CD4-positive, alpha-beta memory T cell (primary cell): ENCODE measurements at regions of chr17 and their contacts with region 1.

Region 1: GRCh38 chr17:48307814-48308411 is 122.1 kb downstream of the SKAP1 start:
- DNase-seq: peak; percentile 38 to 55 (median 42)
- H3K4me3 ChIP-seq: no peak overlapping the region
- H3K4me3 Mint-ChIP-seq: no peak overlapping the region
- H3K27ac ChIP-seq: no peak overlapping the region
- H3K27ac Mint-ChIP-seq: peak overlapping the region in 2 of 7 donors; percentile 15 to 29
- H3K4me1 ChIP-seq: no peaks in the 10 kb centered on the region
- H3K4me1 Mint-ChIP-seq: peaks cover 15 to 33% (median 21%) of the 10 kb centered on the region in 4 donors
- H3K27me3 ChIP-seq: no peaks in the 10 kb centered on the region
- H3K27me3 Mint-ChIP-seq: no peaks in the 10 kb centered on the region

Region 2: GRCh38 chr17:48261297-48261880 is 46.5 kb before region 1 on chr17:
- CTCF ChIA-PET with region 1: interaction called, 16 read pairs
- POLR2A ChIA-PET with region 1: no interaction called
- intact Hi-C with region 1: loop called (anchors 1 kb)
- DNase-seq: no peak
- H3K4me3 ChIP-seq: no peak overlapping the region
- H3K4me3 Mint-ChIP-seq: peak overlapping the region in 1 of 8 donors; percentile 8
- H3K27ac ChIP-seq: no peak overlapping the region
- H3K27ac Mint-ChIP-seq: peak overlapping the region in 2 of 7 donors; percentile 43 to 66
- H3K4me1 ChIP-seq: peaks cover 3% of the 10 kb centered on the region
- H3K4me1 Mint-ChIP-seq: peaks cover 6 to 28% (median 19%) of the 10 kb centered on the region in 4 donors
- H3K27me3 ChIP-seq: no peaks in the 10 kb centered on the region
- H3K27me3 Mint-ChIP-seq: no peaks in the 10 kb centered on the region

Region 3: GRCh38 chr17:48295362-48296288 is 12.3 kb before region 1 on chr17:
- CTCF ChIA-PET with region 1: interaction called, 21 read pairs
- POLR2A ChIA-PET with region 1: interaction called, 10 read pairs
- intact Hi-C with region 1: loop called (anchors 2 kb)
- DNase-seq: peak; percentile 22 to 63 (median 37)
- H3K4me3 ChIP-seq: peak overlapping the region in 1 of 2 donors; percentile 21
- H3K4me3 Mint-ChIP-seq: peak overlapping the region; percentile 64 to 85 (median 77)
- H3K27ac ChIP-seq: peak overlapping the region; percentile 55
- H3K27ac Mint-ChIP-seq: peak overlapping the region; percentile 42 to 95 (median 89)
- H3K4me1 ChIP-seq: peaks cover 66% of the 10 kb centered on the region
- H3K4me1 Mint-ChIP-seq: peaks cover 52 to 80% (median 58%) of the 10 kb centered on the region in 4 donors
- H3K27me3 ChIP-seq: no peaks in the 10 kb centered on the region
- H3K27me3 Mint-ChIP-seq: no peaks in the 10 kb centered on the region

Region 4: GRCh38 chr17:48335858-48336500 is 28.1 kb after region 1 on chr17:
- CTCF ChIA-PET with region 1: interaction called, 12 read pairs
- POLR2A ChIA-PET with region 1: no interaction called
- intact Hi-C with region 1: no loop called
- DNase-seq: peak in 4 of 5 donors; percentile 61 to 70 (median 66)
- H3K4me3 ChIP-seq: no peak overlapping the region
- H3K4me3 Mint-ChIP-seq: no peak overlapping the region
- H3K27ac ChIP-seq: no peak overlapping the region
- H3K27ac Mint-ChIP-seq: peak overlapping the region in 2 of 7 donors; percentile 63 to 65
- H3K4me1 ChIP-seq: no peaks in the 10 kb centered on the region
- H3K4me1 Mint-ChIP-seq: peaks cover 0 to 11% (median 4%) of the 10 kb centered on the region in 4 donors
- H3K27me3 ChIP-seq: no peaks in the 10 kb centered on the region
- H3K27me3 Mint-ChIP-seq: no peaks in the 10 kb centered on the region

Region 5: DNA sequence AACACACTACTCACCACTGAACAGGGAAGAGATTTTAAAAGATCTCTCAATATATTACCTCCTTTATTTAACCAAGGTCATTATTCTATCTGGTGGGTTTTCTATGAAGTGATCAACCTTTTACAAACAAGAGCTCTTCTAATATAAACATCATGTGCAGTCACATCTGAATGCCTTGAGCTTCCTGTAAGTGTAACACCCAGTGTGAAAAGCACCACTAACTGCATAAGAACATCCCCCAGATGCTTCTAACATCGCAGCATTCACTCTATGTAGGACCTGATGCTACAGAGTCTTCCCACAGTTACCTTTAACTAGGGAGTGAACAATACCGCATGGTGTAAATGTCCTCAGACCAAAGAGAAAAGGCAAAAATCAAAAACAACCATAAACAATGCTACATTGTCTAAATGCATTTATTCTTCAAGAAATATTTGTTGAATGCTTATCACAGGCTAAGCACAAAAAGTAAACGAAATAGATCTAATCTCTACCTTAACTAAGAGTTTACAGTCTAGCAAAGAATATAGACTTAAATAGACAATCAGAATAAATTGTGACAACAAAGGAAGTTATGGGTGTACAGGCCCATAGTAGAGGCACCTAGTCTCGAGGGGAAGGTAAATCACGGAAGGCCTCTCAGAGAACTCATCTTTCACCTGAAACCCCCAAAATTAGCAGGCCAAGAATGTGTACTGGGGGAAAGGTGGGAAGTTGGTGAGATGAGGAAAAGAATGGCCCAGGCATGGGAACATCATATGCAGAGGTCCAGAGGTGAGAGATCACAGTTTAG is 105.9 kb after region 1 on chr17:
- CTCF ChIA-PET with region 1: no interaction called
- POLR2A ChIA-PET with region 1: no interaction called
- intact Hi-C with region 1: no loop called
- DNase-seq: peak in 2 of 5 donors; percentile 19 to 29
- H3K4me3 ChIP-seq: no peak overlapping the region
- H3K4me3 Mint-ChIP-seq: peak overlapping the region; percentile 63 to 85 (median 74)
- H3K27ac ChIP-seq: peak overlapping the region; percentile 48
- H3K27ac Mint-ChIP-seq: peak overlapping the region; percentile 80 to 96 (median 91)
- H3K4me1 ChIP-seq: peaks cover 95% of the 10 kb centered on the region
- H3K4me1 Mint-ChIP-seq: peaks cover 63 to 88% (median 78%) of the 10 kb centered on the region in 4 donors
- H3K27me3 ChIP-seq: no peaks in the 10 kb centered on the region
- H3K27me3 Mint-ChIP-seq: no peaks in the 10 kb centered on the region

Region 6: DNA sequence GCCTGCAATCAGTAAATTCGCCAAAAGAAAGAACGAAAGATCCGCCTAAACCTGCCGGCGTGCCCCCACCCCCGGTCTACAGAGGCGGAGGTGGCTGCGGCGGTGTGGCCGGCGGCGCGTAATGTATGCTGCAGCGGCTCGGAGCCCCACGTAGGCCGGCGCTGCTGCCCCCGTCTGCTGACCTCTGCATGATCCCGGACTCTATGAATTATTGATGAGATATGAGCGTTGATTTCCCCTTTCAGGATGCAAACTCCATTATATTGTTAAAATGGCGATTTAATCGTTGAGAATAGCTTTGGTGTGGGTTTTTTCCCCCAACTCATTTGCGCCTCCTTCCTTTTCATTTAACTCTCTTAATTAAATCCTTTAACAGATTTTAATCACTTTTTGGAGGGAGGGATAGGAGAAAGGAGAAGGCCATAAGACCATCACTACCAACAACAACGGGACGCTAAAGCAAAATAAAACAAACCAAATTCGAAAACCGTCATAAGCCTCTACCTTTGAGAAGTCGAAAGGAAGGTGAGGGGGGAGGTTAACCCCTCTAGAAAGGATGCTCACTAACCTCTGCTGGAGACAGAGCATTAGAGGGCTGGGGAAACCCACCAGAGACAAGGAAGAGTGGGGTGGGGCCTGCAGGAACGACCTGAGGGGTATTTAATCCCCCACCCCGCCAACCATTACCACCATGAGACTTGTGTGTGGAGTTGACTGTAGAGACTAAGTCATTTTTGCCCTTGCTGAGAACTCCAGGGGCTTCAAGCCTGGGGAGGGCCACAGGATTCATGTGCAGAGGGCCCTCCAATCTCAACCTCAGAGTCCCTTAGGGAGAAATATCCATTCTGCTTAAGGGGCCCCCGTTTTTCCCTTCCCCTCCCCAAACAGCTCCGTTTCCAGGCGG is 278.7 kb after region 1 on chr17:
- CTCF ChIA-PET with region 1: interaction called, 11 read pairs
- POLR2A ChIA-PET with region 1: no interaction called
- intact Hi-C with region 1: no loop called
- DNase-seq: no peak
- H3K4me3 ChIP-seq: peak overlapping the region; percentile 73 to 98
- H3K4me3 Mint-ChIP-seq: peak overlapping the region; percentile 90 to 97 (median 94)
- H3K27ac ChIP-seq: no peak overlapping the region
- H3K27ac Mint-ChIP-seq: peak overlapping the region in 3 of 7 donors; percentile 11 to 82 (median 69)
- H3K4me1 ChIP-seq: peaks cover 29% of the 10 kb centered on the region
- H3K4me1 Mint-ChIP-seq: peaks cover 12 to 46% (median 29%) of the 10 kb centered on the region in 4 donors
- H3K27me3 ChIP-seq: peaks cover 34% of the 10 kb centered on the region
- H3K27me3 Mint-ChIP-seq: peaks cover 49 to 70% of the 10 kb centered on the region in 2 donors

Region 7: GRCh38 chr17:48944519-48945260 is 636.8 kb after region 1 on chr17 and contains the start of gene SNF8:
- CTCF ChIA-PET with region 1: no interaction called
- POLR2A ChIA-PET with region 1: no interaction called
- intact Hi-C with region 1: no loop called
- DNase-seq: peak; percentile 89 to 92 (median 91)
- H3K4me3 ChIP-seq: peak within 1 kb of the TSS; percentile 91 to 99
- H3K4me3 Mint-ChIP-seq: peak within 1 kb of the TSS; percentile 95 to 99 (median 96)
- H3K27ac ChIP-seq: peak within 1 kb of the TSS; percentile 89
- H3K27ac Mint-ChIP-seq: peak within 1 kb of the TSS; percentile 96 to 98 (median 97)
- H3K4me1 ChIP-seq: peaks cover 28% of the 10 kb centered on the region
- H3K4me1 Mint-ChIP-seq: peaks cover 5 to 31% (median 13%) of the 10 kb centered on the region in 4 donors
- H3K27me3 ChIP-seq: no peaks in the 10 kb centered on the region
- H3K27me3 Mint-ChIP-seq: peaks cover 0 to 2% of the 10 kb centered on the region in 2 donors
- total RNA-seq, gene SNF8: 55.6 to 59.4 TPM